Naive thymus-derived CD8-positive, alpha-beta T cell (primary cell): ENCODE measurements at regions of chrX and their contacts with region 1.

Region 1: GRCh38 chrX:13699183-13699826 is 10.4 kb downstream of the RAB9A start:
- DNase-seq: no peak
- ATAC-seq: no peak
- H3K4me3 Mint-ChIP-seq: peak overlapping the region in 3 of 10 donors; percentile 8 to 57 (median 23)
- H3K27ac Mint-ChIP-seq: peak overlapping the region in 2 of 10 donors; percentile 56 to 71
- H3K4me1 Mint-ChIP-seq: peaks cover 19 to 92% (median 61%) of the 10 kb centered on the region in 4 donors
- H3K27me3 Mint-ChIP-seq: no peaks in the 10 kb centered on the region

Region 2: DNA sequence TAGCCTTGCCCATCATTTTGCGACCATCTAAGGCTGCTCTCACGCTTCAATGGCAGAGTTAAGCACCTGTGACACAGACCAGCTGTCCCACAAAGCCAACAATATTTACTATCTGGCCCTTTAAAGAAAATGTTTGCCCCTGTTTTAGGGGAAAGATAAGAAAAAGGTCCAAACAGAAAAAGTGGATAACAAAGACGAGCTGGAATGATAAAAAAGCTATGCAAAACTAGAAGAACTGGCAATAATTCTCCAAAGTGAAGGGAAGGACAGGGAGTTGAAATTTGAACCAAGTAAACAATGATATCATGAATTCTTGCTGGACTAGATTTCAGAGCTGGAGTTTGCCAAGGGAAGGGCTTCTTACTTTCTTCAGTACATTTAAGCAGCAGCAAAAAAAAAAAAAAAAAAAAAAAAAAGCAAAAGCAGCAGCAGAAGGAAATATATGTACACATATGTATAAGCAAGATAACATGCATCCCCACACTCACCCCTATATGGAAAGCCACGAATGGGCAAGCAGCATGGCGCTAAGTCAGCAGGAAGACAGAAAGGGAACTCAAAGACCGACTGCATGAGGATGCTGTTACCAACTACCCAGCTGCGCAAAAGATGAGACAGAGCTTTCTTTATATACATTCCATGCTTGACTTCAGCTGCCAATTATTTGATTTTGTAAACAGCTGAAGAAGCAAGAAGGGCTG is 22.7 kb after region 1 on chrX:
- POLR2A ChIA-PET with region 1: interaction called, 11 read pairs
- DNase-seq: no peak
- ATAC-seq: no peak
- H3K4me3 Mint-ChIP-seq: peak overlapping the region in 1 of 10 donors; percentile 19
- H3K27ac Mint-ChIP-seq: peak overlapping the region; percentile 31 to 86 (median 70)
- H3K4me1 Mint-ChIP-seq: peaks cover 24 to 73% (median 56%) of the 10 kb centered on the region in 4 donors
- H3K27me3 Mint-ChIP-seq: no peaks in the 10 kb centered on the region